ENCODE measurements at regions of chr13 and their contacts with region 1.

Region 1: DNA sequence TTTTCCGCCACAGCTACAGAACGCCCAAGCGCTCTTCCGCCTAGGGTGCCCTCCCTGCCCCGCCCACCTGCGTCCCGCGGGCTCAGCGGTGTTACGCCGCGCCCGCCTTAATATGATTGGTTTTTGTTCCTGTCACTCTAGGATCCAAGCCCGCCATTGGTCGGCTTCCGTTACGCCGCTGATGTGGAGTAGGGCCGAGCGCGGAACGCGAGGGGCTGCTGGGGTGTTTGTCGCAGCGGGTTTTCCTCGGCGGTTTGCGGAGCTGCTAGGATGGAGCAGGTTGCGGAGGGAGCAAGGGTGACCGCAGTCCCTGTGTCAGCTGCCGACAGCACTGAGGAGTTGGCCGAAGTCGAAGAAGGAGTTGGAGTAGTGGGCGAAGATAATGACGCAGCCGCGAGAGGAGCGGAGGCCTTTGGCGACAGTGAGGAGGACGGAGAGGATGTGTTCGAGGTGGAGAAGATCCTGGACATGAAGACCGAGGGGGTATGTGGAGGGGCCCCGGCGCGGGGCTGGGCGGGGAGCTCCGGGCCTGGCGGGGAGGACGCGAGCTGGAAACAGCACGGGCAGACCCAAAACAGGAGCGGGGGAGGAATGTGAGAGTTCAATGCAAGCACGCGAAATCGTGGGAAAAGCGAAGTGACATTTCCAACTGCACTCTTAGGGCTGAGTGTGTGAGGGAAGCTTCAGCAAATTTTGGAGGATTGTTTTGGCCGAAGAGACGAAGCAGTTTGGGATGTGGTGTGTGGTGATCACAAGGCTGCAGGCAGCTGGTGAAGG is at the start of gene MPHOSPH8:
- DNase-seq: peak; percentile 94
- H3K4me3 Mint-ChIP-seq: peak within 1 kb of the TSS; percentile 100
- H3K27ac Mint-ChIP-seq: peak within 1 kb of the TSS; percentile 99
- H3K4me1 Mint-ChIP-seq: no peaks in the 10 kb centered on the region
- H3K27me3 Mint-ChIP-seq: no peaks in the 10 kb centered on the region
- CTCF ChIP-seq: no peak
- total RNA-seq, gene MPHOSPH8: 31.9 and 32.4 TPM in 2 replicates

Region 2: DNA sequence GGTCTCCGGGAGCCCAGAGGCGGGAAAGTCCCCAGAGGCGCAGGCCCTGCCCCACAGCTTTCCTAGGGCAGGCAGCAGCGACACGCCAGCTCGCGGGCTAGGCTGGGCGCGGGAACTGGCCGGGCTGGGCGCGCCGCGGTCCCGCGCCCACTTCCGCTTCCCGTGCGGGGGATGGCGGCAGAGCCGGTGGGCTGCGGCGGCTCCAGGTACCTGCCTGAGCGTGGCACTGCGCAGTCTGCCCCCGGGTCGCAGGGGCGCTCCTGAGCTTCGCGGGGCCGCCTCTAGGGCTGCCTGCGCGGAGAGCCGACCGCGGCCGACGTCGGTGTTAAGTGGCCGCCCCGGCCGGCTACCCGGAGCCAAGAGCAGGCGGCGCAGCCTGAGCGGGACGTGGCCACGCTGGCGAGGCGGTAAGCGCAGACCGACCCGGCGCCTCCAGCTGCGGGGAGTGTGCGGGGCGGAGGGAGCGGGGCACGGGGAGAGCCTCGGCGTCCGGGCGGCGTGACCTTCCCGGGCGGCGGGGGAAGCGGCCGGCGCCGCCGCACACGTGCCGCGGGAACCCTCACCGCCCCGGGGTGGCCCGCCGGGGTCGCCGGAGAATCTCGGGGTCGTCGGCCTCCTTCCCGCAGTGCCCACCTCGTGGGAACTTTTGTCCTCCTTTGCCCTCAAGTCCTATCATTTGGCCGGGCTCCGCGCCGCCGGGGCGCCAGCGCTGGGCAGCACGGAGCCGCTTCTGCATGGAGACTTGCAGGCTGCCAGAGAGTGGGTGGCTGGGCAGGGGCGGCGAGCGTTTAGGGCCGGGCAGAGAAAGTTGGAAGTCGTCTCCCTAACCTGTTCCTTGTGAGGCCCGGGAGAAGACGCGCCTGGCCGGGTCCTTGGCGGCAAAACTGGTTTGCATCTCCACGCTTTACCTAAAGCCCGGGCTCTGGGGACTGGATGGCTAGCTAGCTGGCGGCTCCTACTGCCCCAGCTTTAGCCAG is 31.6 kb before region 1 on chr13:
- CTCF ChIA-PET with region 1: no interaction called
- POLR2A ChIA-PET with region 1: interaction called, 23 read pairs
- intact Hi-C with region 1: no loop called
- DNase-seq: peak; percentile 46
- H3K4me3 Mint-ChIP-seq: peak overlapping the region; percentile 69
- H3K27ac Mint-ChIP-seq: no peak overlapping the region
- H3K4me1 Mint-ChIP-seq: peaks cover 12% of the 10 kb centered on the region
- H3K27me3 Mint-ChIP-seq: no peaks in the 10 kb centered on the region
- CTCF ChIP-seq: no peak